ENCODE measurements at regions of chr7 and their contacts with region 1.

Region 1: DNA sequence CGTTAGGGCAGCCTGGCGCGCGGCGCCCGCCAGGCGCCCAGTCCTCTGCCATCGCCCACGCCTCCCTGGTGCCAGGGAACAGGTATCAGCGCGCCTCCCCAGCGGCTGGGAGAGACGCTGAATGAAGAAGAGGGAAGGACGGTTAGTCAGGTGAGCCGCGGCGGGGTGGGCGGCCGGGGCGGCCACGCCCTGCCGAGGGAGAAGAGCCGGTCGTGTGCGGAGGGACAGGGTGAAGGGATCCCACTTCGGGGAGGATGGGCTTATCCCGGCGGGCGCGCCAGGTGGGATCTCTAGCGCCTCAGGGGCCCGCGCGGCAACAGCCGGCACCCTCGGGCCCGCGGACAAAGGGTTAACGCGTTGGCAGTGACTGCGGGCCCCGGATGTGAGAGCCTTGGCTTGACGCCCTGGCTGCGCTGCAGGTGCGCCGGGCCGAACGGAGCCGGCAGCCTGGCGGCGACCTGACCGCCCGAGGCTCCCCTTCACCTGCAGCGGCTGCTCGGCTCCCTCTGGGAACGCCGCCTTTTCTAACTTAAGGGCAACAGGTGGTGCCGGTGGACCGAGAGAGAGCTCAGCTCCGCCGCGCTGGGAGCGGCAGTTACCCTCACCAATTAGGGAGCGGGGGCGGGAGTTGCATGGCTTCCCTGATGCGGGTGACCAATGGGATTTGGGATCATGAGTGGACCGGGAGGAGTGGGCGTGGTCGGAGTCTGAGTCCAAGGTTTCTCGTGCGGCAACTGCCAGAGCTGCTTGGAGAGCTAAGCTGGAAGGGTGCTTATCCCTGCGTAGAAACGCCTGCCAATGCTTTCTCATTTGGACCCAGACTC is at the start of gene ARL4A:
- DNase-seq: peak; percentile 97 to 100
- H3K4me3 ChIP-seq: peak within 1 kb of the TSS; percentile 77
- H3K27ac ChIP-seq: peak within 1 kb of the TSS; percentile 63
- H3K4me1 ChIP-seq: peaks cover 15% of the 10 kb centered on the region; the same call in 1 of the 2 replicates
- H3K27me3 ChIP-seq: no peaks in the 10 kb centered on the region
- CTCF ChIP-seq: peak; percentile 56; the same call in 1 of the 2 replicates
- total RNA-seq, gene ARL4A: 17.9 and 18.0 TPM in 2 replicates

Region 2: DNA sequence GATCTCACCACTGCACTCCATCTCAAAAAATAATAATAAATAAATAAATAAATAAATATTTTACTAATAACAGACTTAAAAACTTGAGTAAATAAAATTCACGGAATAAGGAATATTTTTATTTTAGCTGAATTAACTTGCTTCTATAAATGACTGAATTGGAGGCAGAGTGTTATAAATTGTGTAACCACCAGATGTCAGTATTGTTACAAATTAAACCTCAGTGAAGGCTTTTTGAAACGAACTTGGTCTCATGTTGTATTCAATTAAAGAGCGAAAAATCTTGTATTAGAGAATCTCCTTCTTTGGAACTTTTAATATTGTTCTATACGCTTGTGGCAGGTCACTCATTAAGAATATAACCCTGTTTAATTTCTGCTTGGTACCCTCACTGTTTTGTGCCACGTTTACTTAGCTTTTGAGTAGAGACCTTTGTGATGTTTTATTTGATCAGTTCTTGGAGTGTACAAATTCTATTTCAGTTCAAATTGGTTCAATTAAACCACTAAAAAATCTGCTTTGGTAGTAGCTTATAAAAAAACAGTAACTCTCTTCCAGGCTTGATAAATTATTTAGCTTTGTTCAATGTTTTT is 162.2 kb before region 1 on chr7:
- CTCF ChIA-PET with region 1: no interaction called
- POLR2A ChIA-PET with region 1: no interaction called
- intact Hi-C with region 1: loop called (anchors 1 kb)
- DNase-seq: peak in 1 of 2 experiments; percentile 56
- H3K4me3 ChIP-seq: no peak overlapping the region
- H3K27ac ChIP-seq: no peak overlapping the region
- H3K4me1 ChIP-seq: no peaks in the 10 kb centered on the region
- H3K27me3 ChIP-seq: no peaks in the 10 kb centered on the region
- CTCF ChIP-seq: peak; percentile 85

Region 3: DNA sequence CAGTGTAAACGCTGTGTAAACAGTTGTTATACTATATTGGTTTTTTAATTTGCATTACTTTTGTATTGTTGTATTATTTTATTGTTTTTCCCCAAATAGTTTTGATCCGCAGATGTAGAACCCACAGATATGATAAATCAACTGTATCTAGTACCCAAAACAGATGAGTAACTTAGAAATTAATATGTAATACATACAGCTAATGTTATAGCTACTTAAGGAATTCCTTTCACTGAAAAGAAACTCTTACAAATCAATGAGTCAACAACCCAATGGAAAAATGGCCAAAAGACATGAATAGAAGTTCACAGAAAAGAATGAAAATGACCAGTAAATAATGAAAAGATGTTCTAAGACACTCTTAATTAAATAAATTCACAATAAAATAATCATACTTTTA is 31.9 kb before region 1 on chr7:
- CTCF ChIA-PET with region 1: no interaction called
- POLR2A ChIA-PET with region 1: no interaction called
- intact Hi-C with region 1: loop called (anchors 1 kb)
- DNase-seq: no peak
- H3K4me3 ChIP-seq: no peak overlapping the region
- H3K27ac ChIP-seq: no peak overlapping the region
- H3K4me1 ChIP-seq: peaks cover 2% of the 10 kb centered on the region
- H3K27me3 ChIP-seq: no peaks in the 10 kb centered on the region
- CTCF ChIP-seq: no peak

Region 4: GRCh38 chr7:12802098-12802497 is 115.0 kb after region 1 on chr7:
- CTCF ChIA-PET with region 1: no interaction called
- POLR2A ChIA-PET with region 1: interaction called, 5 read pairs
- intact Hi-C with region 1: loop called (anchors 2 kb)
- DNase-seq: peak in 1 of 2 experiments; percentile 66
- H3K4me3 ChIP-seq: peak overlapping the region; percentile 29
- H3K27ac ChIP-seq: peak overlapping the region; percentile 45
- H3K4me1 ChIP-seq: peaks cover 30% of the 10 kb centered on the region
- H3K27me3 ChIP-seq: no peaks in the 10 kb centered on the region
- CTCF ChIP-seq: no peak

Region 5: DNA sequence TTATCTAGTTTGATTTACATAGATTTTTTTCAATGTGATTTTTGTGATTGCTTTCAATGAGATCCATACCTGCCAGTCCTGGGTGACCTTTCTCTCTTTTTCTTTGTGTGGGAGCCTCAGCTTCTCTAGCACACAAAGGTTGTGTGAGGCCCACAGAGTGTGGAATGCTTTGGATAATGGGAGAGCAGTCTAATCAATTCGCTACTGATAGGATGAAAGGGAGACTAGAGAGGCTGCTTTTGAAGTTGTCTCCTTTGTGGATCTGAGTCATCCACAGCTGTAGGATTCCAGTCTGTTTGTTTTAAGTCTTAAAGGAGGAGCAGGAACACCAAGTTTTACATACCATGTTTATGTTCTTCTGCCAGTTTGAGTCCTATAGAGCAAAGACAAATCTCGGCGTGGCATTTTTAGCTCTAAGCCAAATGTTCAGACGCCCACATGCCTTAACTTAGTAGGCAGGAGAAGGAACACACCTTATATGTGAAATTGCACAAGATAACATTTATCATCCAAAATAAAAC is 330.3 kb after region 1 on chr7:
- CTCF ChIA-PET with region 1: no interaction called
- POLR2A ChIA-PET with region 1: no interaction called
- intact Hi-C with region 1: loop called (anchors 2 kb)
- DNase-seq: peak; percentile 23 to 68
- H3K4me3 ChIP-seq: peak overlapping the region; percentile 19; the same call in 1 of the 2 replicates
- H3K27ac ChIP-seq: peak overlapping the region; percentile 19
- H3K4me1 ChIP-seq: peaks cover 16% of the 10 kb centered on the region
- H3K27me3 ChIP-seq: no peaks in the 10 kb centered on the region
- CTCF ChIP-seq: no peak

Region 6: GRCh38 chr7:13262929-13263530 is 575.9 kb after region 1 on chr7:
- CTCF ChIA-PET with region 1: interaction called, 5 read pairs
- POLR2A ChIA-PET with region 1: interaction called, 6 read pairs
- intact Hi-C with region 1: loop called (anchors 1 kb)
- DNase-seq: no peak
- H3K4me3 ChIP-seq: no peak overlapping the region
- H3K27ac ChIP-seq: no peak overlapping the region
- H3K4me1 ChIP-seq: no peaks in the 10 kb centered on the region
- H3K27me3 ChIP-seq: no peaks in the 10 kb centered on the region
- CTCF ChIP-seq: peak; percentile 82